ENCODE measurements at regions of chr20 and their contacts with region 1.

Region 1: DNA sequence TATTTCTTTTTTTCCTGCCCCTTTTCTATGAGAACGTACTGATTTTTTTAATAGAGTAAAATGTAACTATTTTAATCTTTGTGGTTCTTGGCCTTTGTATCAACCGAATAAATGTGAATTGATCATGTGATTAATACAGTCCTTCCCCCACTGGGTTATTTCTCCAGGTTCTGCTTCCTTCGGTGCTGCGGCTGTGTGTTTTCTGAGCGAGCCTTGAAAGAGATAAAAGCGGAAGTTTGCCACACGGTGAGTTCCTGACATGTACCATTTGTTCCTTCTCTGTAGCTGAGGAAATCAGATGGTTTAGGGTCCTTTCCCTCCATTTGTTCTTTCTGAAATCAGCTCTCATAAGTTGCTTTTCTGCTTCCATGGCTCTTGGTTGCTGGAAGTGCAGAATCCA is 15.5 kb downstream of the RTF2 start:
- DNase-seq: no peak

Region 2: DNA sequence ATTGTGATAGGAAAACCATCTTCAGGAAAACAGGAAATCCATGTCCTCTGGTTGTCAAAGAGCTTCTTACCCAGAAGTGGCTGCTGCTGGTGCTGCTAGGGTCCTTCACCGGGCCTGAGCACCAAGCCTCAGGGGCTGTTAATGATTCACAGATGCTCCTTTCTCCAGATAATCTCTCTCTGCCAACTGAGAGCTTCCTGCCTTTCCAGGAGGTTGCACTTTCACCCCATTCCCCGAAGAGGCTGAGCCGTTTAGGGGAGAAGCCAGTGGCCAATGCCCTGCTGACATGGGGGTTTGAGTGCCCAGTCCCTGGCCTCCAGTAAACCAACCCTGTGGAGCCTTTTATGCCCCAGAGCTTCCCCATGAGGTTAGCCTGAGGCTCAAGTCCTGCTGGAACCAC is 601.0 kb before region 1 on chr20:
- intact Hi-C with region 1: loop called in 1 of 2 experiments (anchors 5 kb)
- DNase-seq: no peak

Region 3: GRCh38 chr20:56513161-56514150 is 29.5 kb after region 1 on chr20:
- intact Hi-C with region 1: no loop called
- DNase-seq: no peak

Region 4: DNA sequence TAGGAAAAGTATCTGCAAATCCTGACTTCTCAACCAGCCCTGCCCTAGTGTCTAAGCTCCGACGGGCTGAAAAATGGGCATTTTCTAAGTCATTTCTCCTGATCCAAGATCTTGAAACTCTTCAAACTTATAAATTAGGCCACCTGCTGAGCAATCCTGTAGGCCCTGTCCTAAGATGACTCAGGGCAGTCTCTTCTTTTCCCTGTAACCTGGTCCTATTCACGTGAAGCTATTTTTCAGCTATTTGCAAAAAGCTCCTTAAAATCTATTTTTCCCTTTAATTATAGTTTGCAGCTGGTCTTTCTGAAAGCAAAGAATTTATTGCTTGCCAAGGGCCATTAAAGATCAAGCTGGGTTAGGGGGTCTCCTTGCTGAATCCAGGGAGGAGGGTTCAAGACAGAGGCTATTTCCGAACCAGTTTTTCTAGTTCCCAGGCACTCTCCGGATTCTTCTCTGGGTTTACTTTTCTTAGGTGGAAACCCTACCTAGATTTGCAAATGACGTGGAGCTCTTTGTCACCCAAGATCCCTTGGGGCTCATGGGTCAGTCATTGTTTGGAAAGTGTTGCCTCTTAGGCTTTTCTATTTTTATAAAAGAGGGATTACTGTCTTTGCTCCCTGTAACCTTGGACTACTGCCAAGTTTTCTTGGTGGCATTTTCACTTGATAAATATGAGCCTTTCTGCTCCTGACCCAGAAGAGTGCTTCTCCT is 82.5 kb after region 1 on chr20:
- intact Hi-C with region 1: loop called in 1 of 2 experiments (anchors 2 kb)
- DNase-seq: no peak